A549 (cell line): ENCODE measurements at regions of chr17 and their contacts with region 1.

Region 1: DNA sequence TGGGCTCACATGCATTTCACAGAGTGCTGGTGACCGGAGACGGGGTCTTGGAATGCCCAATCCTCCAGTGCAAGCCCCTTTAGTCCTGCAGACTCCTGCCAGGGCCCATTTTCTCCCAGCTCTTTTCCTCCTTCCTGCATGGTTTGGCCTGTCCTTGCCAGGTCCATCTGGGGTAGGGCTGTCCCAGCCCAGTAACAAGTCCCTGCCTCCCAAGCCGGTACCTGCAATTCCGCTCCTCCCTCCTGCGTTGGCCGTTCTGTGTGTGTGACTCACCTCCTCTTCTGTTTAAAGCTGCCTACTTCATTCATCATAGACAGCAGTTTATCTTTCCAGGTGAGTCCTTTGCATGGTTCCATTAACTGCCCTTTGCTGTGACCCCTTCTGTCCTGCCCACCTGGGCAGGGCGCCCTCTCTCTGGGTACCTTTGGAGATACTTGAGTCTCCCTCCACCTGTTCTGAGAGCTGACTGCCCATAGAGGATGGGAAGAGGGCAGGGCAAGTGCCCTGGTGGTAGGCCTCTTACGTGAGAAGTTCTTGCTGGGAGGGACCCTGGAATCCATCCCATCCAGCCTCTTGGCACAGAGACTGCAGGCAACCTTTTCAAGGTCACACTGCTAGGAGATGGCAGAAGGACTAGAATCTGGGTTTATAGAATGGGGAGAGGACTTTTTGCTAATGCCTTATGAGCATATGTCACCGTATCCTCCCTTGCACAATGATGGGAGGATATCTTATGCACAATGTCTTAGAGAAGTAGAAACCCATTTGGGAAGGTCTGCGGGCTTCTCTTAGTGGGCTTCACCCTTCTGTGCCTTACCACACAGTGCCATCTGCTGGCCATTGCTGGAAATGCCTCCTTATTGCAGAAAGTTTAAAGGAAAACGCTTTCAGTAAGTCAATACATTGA is 29.7 kb upstream of the LGALS9 start:
- DNase-seq: peak; percentile 77 to 81
- ATAC-seq: peak; percentile 39 to 61; a peak in 4 of 6 replicates
- H3K4me3 ChIP-seq: no peak overlapping the region
- H3K27ac ChIP-seq: peak overlapping the region in 1 of 2 experiments; percentile 8; a peak in 1 of 6 replicates
- H3K4me1 ChIP-seq: peaks cover 25% of the 10 kb centered on the region
- CTCF ChIP-seq: peak; percentile 98
- EP300 ChIP-seq: no peak
- POLR2A ChIP-seq: no peak
- RAD21 ChIP-seq: peak; percentile 95 to 99

Region 2: GRCh38 chr17:27206447-27206846 is 394.9 kb before region 1 on chr17:
- CTCF ChIA-PET with region 1: interaction called, 10 read pairs
- POLR2A ChIA-PET with region 1: no interaction called
- DNase-seq: peak in 1 of 2 experiments; percentile 22
- ATAC-seq: peak; percentile 58 to 65; a peak in 4 of 6 replicates
- H3K4me3 ChIP-seq: no peak overlapping the region
- H3K27ac ChIP-seq: no peak overlapping the region
- H3K4me1 ChIP-seq: peaks cover 10% of the 10 kb centered on the region; the same call in 2 of the 3 replicates
- CTCF ChIP-seq: peak; percentile 27; the same call in 2 of the 3 replicates
- EP300 ChIP-seq: no peak
- POLR2A ChIP-seq: no peak
- RAD21 ChIP-seq: peak in 1 of 2 experiments; percentile 23; a peak in 1 of 5 replicates

Region 3: GRCh38 chr17:27353461-27354050 is 247.8 kb before region 1 on chr17:
- CTCF ChIA-PET with region 1: interaction called, 358 read pairs
- POLR2A ChIA-PET with region 1: interaction called, 6 read pairs
- DNase-seq: peak; percentile 96 to 97
- ATAC-seq: peak; percentile 85 to 93
- H3K4me3 ChIP-seq: peak overlapping the region; percentile 59
- H3K27ac ChIP-seq: peak overlapping the region; percentile 90 to 99
- H3K4me1 ChIP-seq: peaks cover 25% of the 10 kb centered on the region
- CTCF ChIP-seq: peak; percentile 99
- EP300 ChIP-seq: peak; percentile 49 to 64; a peak in 2 of 5 replicates
- POLR2A ChIP-seq: peak; percentile 81
- RAD21 ChIP-seq: peak; percentile 67 to 99

Region 4: GRCh38 chr17:27430882-27431491 is 170.3 kb before region 1 on chr17:
- CTCF ChIA-PET with region 1: interaction called, 21 read pairs
- POLR2A ChIA-PET with region 1: no interaction called
- DNase-seq: peak; percentile 45 to 67
- ATAC-seq: peak; percentile 94 to 98
- H3K4me3 ChIP-seq: no peak overlapping the region
- H3K27ac ChIP-seq: no peak overlapping the region
- H3K4me1 ChIP-seq: no peaks in the 10 kb centered on the region
- CTCF ChIP-seq: peak; percentile 60
- EP300 ChIP-seq: no peak
- POLR2A ChIP-seq: no peak
- RAD21 ChIP-seq: peak; percentile 74

Region 5: GRCh38 chr17:27494192-27495091 is 106.9 kb before region 1 on chr17:
- CTCF ChIA-PET with region 1: interaction called, 575 read pairs
- POLR2A ChIA-PET with region 1: interaction called, 4 read pairs
- DNase-seq: peak; percentile 71 to 83
- ATAC-seq: peak; percentile 80 to 83
- H3K4me3 ChIP-seq: peak overlapping the region; percentile 24
- H3K27ac ChIP-seq: peak overlapping the region; percentile 84 to 89
- H3K4me1 ChIP-seq: peaks cover 65% of the 10 kb centered on the region
- CTCF ChIP-seq: peak; percentile 82
- EP300 ChIP-seq: no peak
- POLR2A ChIP-seq: no peak
- RAD21 ChIP-seq: peak; percentile 83 to 88

Region 6: GRCh38 chr17:27552469-27552779 is 48.9 kb before region 1 on chr17:
- CTCF ChIA-PET with region 1: interaction called, 140 read pairs
- POLR2A ChIA-PET with region 1: no interaction called
- DNase-seq: peak; percentile 91 to 95
- ATAC-seq: peak; percentile 85 to 88
- H3K4me3 ChIP-seq: 0 out of 3 replicates have a peak overlapping the region, but pooled peaks have one; percentile 10
- H3K27ac ChIP-seq: peak overlapping the region; percentile 91 to 97
- H3K4me1 ChIP-seq: peaks cover 68% of the 10 kb centered on the region
- CTCF ChIP-seq: no peak
- EP300 ChIP-seq: peak; percentile 3 to 35; a peak in 1 of 5 replicates
- POLR2A ChIP-seq: no peak
- RAD21 ChIP-seq: peak in 1 of 2 experiments; percentile 43; a peak in 2 of 5 replicates

Region 7: DNA sequence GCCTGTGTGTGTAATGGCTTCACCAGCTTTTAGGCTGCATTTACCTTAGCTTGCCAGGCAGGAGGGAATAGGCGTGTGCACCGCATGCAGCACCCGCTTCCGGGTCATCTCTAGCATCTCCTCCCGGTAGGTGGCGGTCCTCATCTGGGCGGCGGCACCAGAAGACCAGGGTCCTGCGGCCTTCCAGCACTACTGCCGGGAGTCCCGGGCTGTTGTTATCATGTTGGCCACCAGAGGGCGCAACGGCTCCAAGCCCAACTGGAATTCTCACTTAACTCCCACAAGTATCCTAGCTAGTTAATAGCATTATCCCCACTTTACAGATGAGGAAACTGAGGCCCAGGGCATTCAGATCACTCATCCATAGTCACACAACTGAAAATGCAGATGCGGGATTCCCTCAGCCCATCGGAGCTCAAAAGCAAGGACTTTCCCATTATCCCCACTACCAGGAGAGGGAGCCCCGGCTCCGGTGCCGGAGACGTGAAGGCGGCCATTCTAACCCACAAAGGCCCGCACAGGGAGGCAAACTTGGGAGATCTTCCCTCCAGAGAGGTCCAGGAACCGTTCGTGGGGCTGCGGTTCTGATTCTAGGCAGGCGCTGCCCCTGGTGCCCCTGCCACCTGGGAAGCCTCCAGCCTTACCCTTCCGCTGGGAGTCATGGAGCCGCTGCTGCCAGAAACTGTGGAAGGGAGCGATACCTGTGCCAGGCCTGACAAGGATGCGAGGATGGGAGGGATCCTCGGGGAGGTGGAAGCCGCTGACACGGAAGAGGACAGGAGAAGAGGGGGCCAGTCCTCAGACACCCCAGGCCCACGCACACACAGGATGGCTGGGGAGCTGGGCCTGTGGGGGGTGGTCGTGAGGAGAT is 53.6 kb after region 1 on chr17:
- CTCF ChIA-PET with region 1: interaction called, 374 read pairs
- POLR2A ChIA-PET with region 1: no interaction called
- DNase-seq: peak; percentile 92 to 94
- ATAC-seq: peak; percentile 79 to 97
- H3K4me3 ChIP-seq: no peak overlapping the region
- H3K27ac ChIP-seq: peak overlapping the region in 1 of 2 experiments; percentile 35; a peak in 1 of 6 replicates
- H3K4me1 ChIP-seq: no peaks in the 10 kb centered on the region
- CTCF ChIP-seq: peak; percentile 100
- EP300 ChIP-seq: no peak
- POLR2A ChIP-seq: no peak
- RAD21 ChIP-seq: peak; percentile 68 to 88

Region 8: GRCh38 chr17:27782791-27783206 is 181.5 kb after region 1 on chr17:
- CTCF ChIA-PET with region 1: no interaction called
- POLR2A ChIA-PET with region 1: no interaction called
- DNase-seq: no peak
- ATAC-seq: no peak
- H3K4me3 ChIP-seq: no peak overlapping the region
- H3K27ac ChIP-seq: no peak overlapping the region
- H3K4me1 ChIP-seq: peaks cover 10% of the 10 kb centered on the region
- CTCF ChIP-seq: no peak
- EP300 ChIP-seq: no peak
- POLR2A ChIP-seq: no peak
- RAD21 ChIP-seq: no peak

Region 9: DNA sequence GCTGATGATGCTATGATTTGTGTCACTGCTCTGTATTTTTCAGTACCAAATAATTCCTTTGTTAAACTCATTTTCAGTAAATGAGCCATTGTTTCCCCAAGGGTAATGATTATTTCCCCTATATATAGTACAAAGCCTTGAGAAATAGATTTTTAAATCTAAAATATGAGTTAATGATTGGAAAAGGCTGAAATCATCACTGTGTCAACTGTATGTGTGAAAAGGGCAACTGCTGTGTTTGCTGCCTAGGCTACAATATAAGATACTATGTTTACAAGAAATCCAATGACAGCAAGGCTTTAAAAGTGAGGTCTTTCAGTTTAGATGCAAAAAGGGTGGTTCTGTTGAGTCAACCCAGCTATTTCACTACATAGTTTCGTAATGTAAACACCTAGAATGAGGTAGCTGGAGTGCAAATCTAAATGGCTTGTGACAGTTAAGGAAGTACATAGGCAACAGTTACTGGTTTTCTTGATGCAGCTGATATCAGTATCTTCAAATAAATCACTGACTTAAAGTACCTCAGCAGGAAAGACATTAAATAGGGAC is 456.5 kb after region 1 on chr17:
- CTCF ChIA-PET with region 1: no interaction called
- POLR2A ChIA-PET with region 1: no interaction called
- DNase-seq: peak in 1 of 2 experiments; percentile 62
- ATAC-seq: peak; percentile 50 to 59; a peak in 3 of 6 replicates
- H3K4me3 ChIP-seq: no peak overlapping the region
- H3K27ac ChIP-seq: no peak overlapping the region
- H3K4me1 ChIP-seq: peaks cover 29% of the 10 kb centered on the region
- CTCF ChIP-seq: no peak
- EP300 ChIP-seq: no peak
- POLR2A ChIP-seq: no peak
- RAD21 ChIP-seq: no peak